Activated CD8-positive, alpha-beta T cell treated with anti-CD3 and anti-CD28 coated beads, Interleukin-2, amount 10 ng/mL, durations not matched to agents 7 days and 5 days (primary cell): ENCODE measurements at regions of chr17 and their contacts with region 1.

Region 1: DNA sequence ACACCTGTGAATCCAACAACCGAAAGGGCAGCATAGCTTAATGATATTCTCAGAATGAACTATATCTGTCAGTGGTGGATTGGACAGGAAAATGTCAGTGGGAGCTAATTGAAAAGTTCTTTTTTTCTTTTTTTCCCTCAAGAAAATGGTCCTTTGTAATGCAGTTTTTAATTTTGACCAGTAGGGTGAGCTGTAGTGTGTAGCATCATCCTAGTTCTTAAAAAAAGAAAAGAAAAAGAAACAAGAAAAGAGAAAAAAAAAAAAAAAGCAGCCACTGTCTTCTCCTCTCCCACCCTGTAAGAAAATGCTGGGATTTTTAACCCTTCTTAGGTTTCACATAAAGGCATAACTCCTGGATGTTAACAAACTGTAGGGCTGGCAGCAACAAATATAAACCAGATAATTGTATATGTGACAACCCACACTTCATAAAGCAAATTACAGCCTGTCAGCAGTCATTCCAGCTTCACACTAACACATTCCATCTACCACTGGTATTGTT is 78.1 kb downstream of the SKAP1 start:
- DNase-seq: no peak
- ATAC-seq: no peak
- H3K4me3 Mint-ChIP-seq: peak overlapping the region; percentile 10
- H3K27ac Mint-ChIP-seq: no peak overlapping the region
- H3K4me1 Mint-ChIP-seq: peaks cover 14% of the 10 kb centered on the region
- H3K27me3 Mint-ChIP-seq: no peaks in the 10 kb centered on the region

Region 2: GRCh38 chr17:48100591-48101011 is 251.3 kb before region 1 on chr17:
- CTCF ChIA-PET with region 1: no interaction called
- POLR2A ChIA-PET with region 1: no interaction called
- DNase-seq: no peak
- ATAC-seq: no peak
- H3K4me3 Mint-ChIP-seq: peak overlapping the region; percentile 99
- H3K27ac Mint-ChIP-seq: peak overlapping the region; percentile 88
- H3K4me1 Mint-ChIP-seq: peaks cover 54% of the 10 kb centered on the region
- H3K27me3 Mint-ChIP-seq: no peaks in the 10 kb centered on the region

Region 3: GRCh38 chr17:48278760-48279491 is 73.0 kb before region 1 on chr17:
- CTCF ChIA-PET with region 1: no interaction called
- POLR2A ChIA-PET with region 1: no interaction called
- DNase-seq: no peak
- ATAC-seq: no peak
- H3K4me3 Mint-ChIP-seq: no peak overlapping the region
- H3K27ac Mint-ChIP-seq: no peak overlapping the region
- H3K4me1 Mint-ChIP-seq: no peaks in the 10 kb centered on the region
- H3K27me3 Mint-ChIP-seq: no peaks in the 10 kb centered on the region

Region 4: GRCh38 chr17:48335858-48336500 is 15.9 kb before region 1 on chr17:
- CTCF ChIA-PET with region 1: interaction called, 23 read pairs
- POLR2A ChIA-PET with region 1: no interaction called
- DNase-seq: no peak
- ATAC-seq: peak; percentile 47
- H3K4me3 Mint-ChIP-seq: no peak overlapping the region
- H3K27ac Mint-ChIP-seq: no peak overlapping the region
- H3K4me1 Mint-ChIP-seq: peaks cover 5% of the 10 kb centered on the region
- H3K27me3 Mint-ChIP-seq: no peaks in the 10 kb centered on the region

Region 5: GRCh38 chr17:48392857-48393256 is 41.0 kb after region 1 on chr17:
- CTCF ChIA-PET with region 1: interaction called, 12 read pairs
- POLR2A ChIA-PET with region 1: no interaction called
- DNase-seq: no peak
- ATAC-seq: no peak
- H3K4me3 Mint-ChIP-seq: no peak overlapping the region
- H3K27ac Mint-ChIP-seq: no peak overlapping the region
- H3K4me1 Mint-ChIP-seq: peaks cover 26% of the 10 kb centered on the region
- H3K27me3 Mint-ChIP-seq: no peaks in the 10 kb centered on the region

Region 6: GRCh38 chr17:48441231-48441711 is 89.4 kb after region 1 on chr17:
- CTCF ChIA-PET with region 1: interaction called, 13 read pairs
- POLR2A ChIA-PET with region 1: no interaction called
- DNase-seq: peak; percentile 71
- ATAC-seq: peak; percentile 65
- H3K4me3 Mint-ChIP-seq: peak overlapping the region; percentile 69
- H3K27ac Mint-ChIP-seq: peak overlapping the region; percentile 93
- H3K4me1 Mint-ChIP-seq: peaks cover 95% of the 10 kb centered on the region
- H3K27me3 Mint-ChIP-seq: no peaks in the 10 kb centered on the region

Region 7: DNA sequence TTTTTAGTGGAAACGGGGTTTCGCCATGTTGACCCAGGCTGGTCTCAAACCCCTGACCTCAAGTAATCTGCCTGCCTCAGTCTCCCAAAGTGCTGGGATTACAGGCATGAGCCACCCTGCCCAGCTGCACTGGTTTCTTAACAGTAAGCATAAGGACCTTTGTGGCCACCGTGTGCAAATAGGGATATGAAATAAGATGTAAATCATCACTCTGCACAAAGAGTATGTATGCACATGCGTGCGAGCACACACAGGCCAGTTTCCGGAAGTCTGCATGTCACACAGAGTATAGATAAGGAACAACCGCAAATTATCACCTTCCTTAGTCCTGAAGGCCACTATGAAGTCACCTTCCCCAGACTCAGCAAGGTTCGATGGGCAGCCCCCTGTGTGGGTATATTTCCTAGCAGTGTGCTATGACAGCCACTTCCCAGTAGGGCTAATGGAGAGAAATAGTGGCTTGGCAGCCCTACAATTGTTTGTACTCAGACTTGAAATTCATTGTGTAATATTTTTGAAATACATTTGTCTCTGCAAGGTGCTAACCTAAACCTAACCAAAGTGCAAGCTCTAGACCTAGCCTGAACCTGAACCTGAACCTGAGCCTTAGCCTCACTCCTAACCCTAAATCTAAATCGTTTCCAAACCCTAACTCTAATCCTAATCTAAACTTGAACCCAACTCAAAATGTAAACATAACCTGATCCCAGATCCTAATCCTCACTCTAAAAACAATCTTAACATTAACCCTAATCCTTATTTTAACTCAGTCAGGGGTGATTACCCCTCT is 126.5 kb after region 1 on chr17:
- CTCF ChIA-PET with region 1: interaction called, 12 read pairs
- POLR2A ChIA-PET with region 1: no interaction called
- DNase-seq: peak; percentile 55
- ATAC-seq: peak; percentile 85
- H3K4me3 Mint-ChIP-seq: no peak overlapping the region
- H3K27ac Mint-ChIP-seq: peak overlapping the region; percentile 76
- H3K4me1 Mint-ChIP-seq: peaks cover 32% of the 10 kb centered on the region
- H3K27me3 Mint-ChIP-seq: peaks cover 2% of the 10 kb centered on the region

Region 8: GRCh38 chr17:48586355-48587258 is 234.7 kb after region 1 on chr17:
- CTCF ChIA-PET with region 1: interaction called, 25 read pairs
- POLR2A ChIA-PET with region 1: no interaction called
- DNase-seq: peak; percentile 49
- ATAC-seq: peak; percentile 27
- H3K4me3 Mint-ChIP-seq: peak overlapping the region; percentile 86
- H3K27ac Mint-ChIP-seq: no peak overlapping the region
- H3K4me1 Mint-ChIP-seq: peaks cover 51% of the 10 kb centered on the region
- H3K27me3 Mint-ChIP-seq: peaks cover 77% of the 10 kb centered on the region